ENCODE measurements at regions of chr4 and their contacts with region 1.

Region 1: DNA sequence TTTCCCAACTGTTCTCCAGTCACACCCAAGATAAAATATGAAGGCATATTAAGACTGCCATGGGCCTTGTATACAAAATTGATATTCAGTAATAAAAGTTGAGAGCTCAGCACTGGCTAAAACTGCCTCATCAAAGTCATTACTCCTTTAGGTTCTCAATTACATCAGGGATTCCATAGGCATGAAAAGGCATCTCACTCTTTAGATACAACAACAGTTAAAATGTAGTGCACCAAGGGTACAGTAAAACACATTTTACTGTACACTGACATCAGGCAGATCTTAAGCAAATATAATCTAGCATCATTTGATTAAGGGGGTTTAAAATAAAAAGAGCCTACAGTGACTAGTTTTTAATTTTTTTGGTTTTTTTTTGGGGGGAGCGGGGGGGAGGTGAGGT is 107.7 kb downstream of the PPP3CA start:
- DNase-seq: no peak
- H3K4me3 Mint-ChIP-seq: no peak overlapping the region
- H3K27ac Mint-ChIP-seq: no peak overlapping the region
- H3K4me1 Mint-ChIP-seq: peaks cover 18% of the 10 kb centered on the region
- H3K27me3 Mint-ChIP-seq: no peaks in the 10 kb centered on the region

Region 2: GRCh38 chr4:101254776-101255175 is 15.1 kb after region 1 on chr4:
- CTCF ChIA-PET with region 1: no interaction called
- intact Hi-C with region 1: loop called (anchors 2 kb)
- DNase-seq: no peak
- H3K4me3 Mint-ChIP-seq: no peak overlapping the region
- H3K27ac Mint-ChIP-seq: no peak overlapping the region
- H3K4me1 Mint-ChIP-seq: peaks cover 18% of the 10 kb centered on the region
- H3K27me3 Mint-ChIP-seq: no peaks in the 10 kb centered on the region

Measured in activated naive CD4-positive, alpha-beta T cell treated with anti-CD3 and anti-CD28 coated beads for 36 hours (primary cell).